B cell (primary cell): ENCODE measurements at regions of chr1 and their contacts with region 1.

Region 1: DNA sequence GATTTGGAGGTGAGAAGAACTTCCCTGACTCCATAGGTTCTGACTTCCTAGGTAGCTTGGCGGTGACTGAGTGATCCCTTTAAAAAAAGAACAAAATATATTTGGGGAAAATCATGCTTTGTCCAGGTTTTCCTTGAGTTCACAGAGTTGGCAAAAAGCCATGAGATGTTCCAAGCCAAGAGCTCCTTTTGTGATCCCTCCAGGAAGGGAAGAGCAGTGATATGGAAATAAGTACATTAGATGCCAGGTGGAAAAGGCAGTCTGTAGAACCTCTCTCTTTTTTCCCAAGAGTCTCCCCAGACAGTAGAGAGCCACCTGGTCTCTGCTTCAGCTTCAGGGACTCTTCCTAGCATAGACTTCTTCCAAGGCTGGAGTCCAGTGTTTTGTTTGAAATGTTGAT is 10.2 kb downstream of the TLCD4 start:
- DNase-seq: no peak
- ATAC-seq: no peak
- H3K4me3 ChIP-seq: no peak overlapping the region
- H3K4me3 Mint-ChIP-seq: no peak overlapping the region
- H3K27ac ChIP-seq: no peak overlapping the region
- H3K27ac Mint-ChIP-seq: no peak overlapping the region
- H3K4me1 ChIP-seq: no peaks in the 10 kb centered on the region
- H3K4me1 Mint-ChIP-seq: no peaks in the 10 kb centered on the region
- H3K27me3 ChIP-seq: peaks cover 0 to 3% (median 2%) of the 10 kb centered on the region in 4 experiments
- H3K27me3 Mint-ChIP-seq: peaks cover 22% of the 10 kb centered on the region
- CTCF ChIP-seq: no peak

Region 2: GRCh38 chr1:95086949-95087533 is 40.3 kb before region 1 on chr1:
- CTCF ChIA-PET with region 1: no interaction called
- POLR2A ChIA-PET with region 1: no interaction called
- intact Hi-C with region 1: no loop called
- DNase-seq: no peak
- ATAC-seq: no peak
- H3K4me3 ChIP-seq: no peak overlapping the region
- H3K4me3 Mint-ChIP-seq: no peak overlapping the region
- H3K27ac ChIP-seq: no peak overlapping the region
- H3K27ac Mint-ChIP-seq: no peak overlapping the region
- H3K4me1 ChIP-seq: no peaks in the 10 kb centered on the region
- H3K4me1 Mint-ChIP-seq: no peaks in the 10 kb centered on the region
- H3K27me3 ChIP-seq: no peaks in the 10 kb centered on the region
- H3K27me3 Mint-ChIP-seq: peaks cover 10% of the 10 kb centered on the region
- CTCF ChIP-seq: no peak

Region 3: GRCh38 chr1:95098196-95098595 is 29.2 kb before region 1 on chr1:
- CTCF ChIA-PET with region 1: no interaction called
- POLR2A ChIA-PET with region 1: no interaction called
- intact Hi-C with region 1: no loop called
- DNase-seq: no peak
- ATAC-seq: no peak
- H3K4me3 ChIP-seq: no peak overlapping the region
- H3K4me3 Mint-ChIP-seq: no peak overlapping the region
- H3K27ac ChIP-seq: no peak overlapping the region
- H3K27ac Mint-ChIP-seq: no peak overlapping the region
- H3K4me1 ChIP-seq: no peaks in the 10 kb centered on the region
- H3K4me1 Mint-ChIP-seq: peaks cover 5% of the 10 kb centered on the region
- H3K27me3 ChIP-seq: peaks cover 0 to 3% (median 1%) of the 10 kb centered on the region in 4 experiments
- H3K27me3 Mint-ChIP-seq: peaks cover 18% of the 10 kb centered on the region
- CTCF ChIP-seq: no peak

Region 4: GRCh38 chr1:95139039-95139438 is 11.7 kb after region 1 on chr1:
- CTCF ChIA-PET with region 1: interaction called, 3 read pairs
- POLR2A ChIA-PET with region 1: interaction called, 12 read pairs
- intact Hi-C with region 1: no loop called
- DNase-seq: no peak
- ATAC-seq: no peak
- H3K4me3 ChIP-seq: no peak overlapping the region
- H3K4me3 Mint-ChIP-seq: no peak overlapping the region
- H3K27ac ChIP-seq: no peak overlapping the region
- H3K27ac Mint-ChIP-seq: no peak overlapping the region
- H3K4me1 ChIP-seq: no peaks in the 10 kb centered on the region
- H3K4me1 Mint-ChIP-seq: no peaks in the 10 kb centered on the region
- H3K27me3 ChIP-seq: no peaks in the 10 kb centered on the region
- H3K27me3 Mint-ChIP-seq: no peaks in the 10 kb centered on the region
- CTCF ChIP-seq: no peak